ENCODE measurements at regions of chr3 and their contacts with region 1.

Region 1: GRCh38 chr3:115169808-115170207 is 22.7 kb upstream of the ZBTB20 start:
- DNase-seq: no peak
- H3K4me3 ChIP-seq: no peak overlapping the region
- H3K27ac ChIP-seq: no peak overlapping the region
- H3K4me1 ChIP-seq: peaks cover 0 to 11% (median 2%) of the 10 kb centered on the region in 6 donors
- H3K27me3 ChIP-seq: no peaks in the 10 kb centered on the region
- CTCF ChIP-seq: peak in 9 of 11 experiments; percentile 15 to 37 (median 31)
- POLR2A ChIP-seq: no peak

Region 2: DNA sequence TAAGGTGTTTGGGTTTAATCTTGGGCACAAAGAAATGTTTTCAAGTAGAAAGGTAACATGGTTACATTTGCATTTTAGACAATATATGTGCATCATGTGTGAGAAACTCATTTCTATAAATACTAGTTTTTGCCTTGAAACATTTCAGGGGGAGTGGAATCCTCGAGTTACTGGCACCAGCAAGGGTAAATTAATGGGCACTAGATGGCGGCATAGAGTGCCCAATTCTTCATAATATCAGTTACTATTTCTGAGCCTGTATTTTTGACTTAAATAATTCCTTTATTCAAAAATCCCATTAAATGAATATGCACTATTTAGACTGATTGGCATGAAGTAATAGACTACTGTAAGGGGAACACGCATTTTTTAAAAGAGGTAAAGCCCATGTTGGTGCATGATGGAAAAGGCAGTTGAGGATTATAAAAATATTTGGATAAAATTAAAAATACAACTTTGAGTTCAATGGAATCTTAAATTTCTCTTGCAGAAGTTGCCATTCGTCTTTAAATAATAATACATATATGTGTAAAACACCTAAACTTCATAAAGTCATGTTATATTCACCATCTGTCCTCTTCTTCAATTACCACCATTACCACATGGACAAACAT is 129.0 kb before region 1 on chr3:
- intact Hi-C with region 1: loop called (anchors 10 kb)
- DNase-seq: no peak
- H3K4me3 ChIP-seq: no peak overlapping the region
- H3K27ac ChIP-seq: no peak overlapping the region
- H3K4me1 ChIP-seq: peaks cover 0 to 6% (median 0%) of the 10 kb centered on the region in 6 donors
- H3K27me3 ChIP-seq: no peaks in the 10 kb centered on the region
- CTCF ChIP-seq: peak in 9 of 11 experiments; percentile 16 to 76 (median 62)
- POLR2A ChIP-seq: no peak

Region 3: DNA sequence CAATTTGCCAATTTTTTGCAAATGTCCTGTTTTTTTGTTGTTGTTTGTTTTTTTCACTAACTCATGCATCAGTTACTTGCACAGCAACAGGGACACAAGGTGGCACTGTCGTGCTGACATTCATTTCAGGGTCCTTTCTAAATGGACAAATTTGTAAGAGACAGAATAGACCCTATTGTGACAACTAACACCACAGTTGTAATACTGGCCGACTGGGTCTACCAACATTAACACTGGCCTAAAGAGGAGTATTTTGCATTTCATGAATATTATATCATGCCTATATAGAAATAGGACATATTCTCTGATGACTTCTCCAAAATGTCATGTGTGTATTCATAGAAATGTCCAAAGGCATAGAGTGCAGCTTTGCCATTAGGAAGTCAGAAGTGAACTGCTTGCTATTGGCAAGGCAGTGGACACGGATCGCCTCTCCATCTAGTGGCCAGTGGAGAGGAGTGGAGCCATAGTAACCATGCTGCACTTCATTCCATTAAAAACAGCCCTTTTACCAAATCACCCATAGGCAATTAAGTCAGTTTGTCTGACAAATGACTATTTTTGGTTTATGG is 77.5 kb before region 1 on chr3:
- intact Hi-C with region 1: loop called (anchors 10 kb)
- DNase-seq: peak; percentile 71
- H3K4me3 ChIP-seq: no peak overlapping the region
- H3K27ac ChIP-seq: peak overlapping the region in 5 of 8 donors; percentile 1 to 39 (median 3)
- H3K4me1 ChIP-seq: peaks cover 0 to 49% (median 18%) of the 10 kb centered on the region in 6 donors
- H3K27me3 ChIP-seq: no peaks in the 10 kb centered on the region
- CTCF ChIP-seq: peak in 9 of 11 experiments; percentile 14 to 67 (median 57)
- POLR2A ChIP-seq: no peak

Region 4: DNA sequence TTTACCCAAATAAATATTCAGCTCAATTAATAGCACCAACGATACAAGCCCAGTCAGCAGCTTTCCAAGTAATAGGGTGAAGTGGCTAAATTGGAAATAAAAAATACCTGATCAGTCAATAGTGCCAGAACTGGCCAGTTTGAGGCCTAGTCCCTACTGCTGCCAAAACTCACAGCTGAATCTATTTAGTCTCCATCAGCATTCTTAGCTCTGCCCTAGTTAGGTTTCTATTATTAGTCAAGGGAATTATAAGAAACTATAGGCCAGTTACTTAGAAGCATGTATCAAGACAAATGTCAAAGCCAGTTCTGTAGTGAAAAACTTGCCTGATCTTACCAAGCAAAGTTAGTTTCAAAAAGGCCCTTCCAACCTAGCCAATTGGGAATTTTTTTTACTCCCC is 123.5 kb after region 1 on chr3:
- intact Hi-C with region 1: no loop called
- DNase-seq: no peak
- H3K4me3 ChIP-seq: no peak overlapping the region
- H3K27ac ChIP-seq: no peak overlapping the region
- H3K4me1 ChIP-seq: no peaks in the 10 kb centered on the region
- H3K27me3 ChIP-seq: no peaks in the 10 kb centered on the region
- CTCF ChIP-seq: no peak
- POLR2A ChIP-seq: no peak

Measured in spleen (tissue), 13 donors.